ENCODE measurements at regions of chr18 and their contacts with region 1.

Region 1: GRCh38 chr18:36067055-36067957 is at the start of gene RPRD1A:
- DNase-seq: peak; percentile 97
- H3K4me3 ChIP-seq: peak within 1 kb of the TSS; percentile 81
- H3K27ac ChIP-seq: peak within 1 kb of the TSS; percentile 88
- H3K4me1 ChIP-seq: peaks cover 9% of the 10 kb centered on the region
- H3K27me3 ChIP-seq: no peaks in the 10 kb centered on the region
- CTCF ChIP-seq: no peak
- total RNA-seq, gene RPRD1A: 65.1 and 66.1 TPM in 2 replicates

Region 2: DNA sequence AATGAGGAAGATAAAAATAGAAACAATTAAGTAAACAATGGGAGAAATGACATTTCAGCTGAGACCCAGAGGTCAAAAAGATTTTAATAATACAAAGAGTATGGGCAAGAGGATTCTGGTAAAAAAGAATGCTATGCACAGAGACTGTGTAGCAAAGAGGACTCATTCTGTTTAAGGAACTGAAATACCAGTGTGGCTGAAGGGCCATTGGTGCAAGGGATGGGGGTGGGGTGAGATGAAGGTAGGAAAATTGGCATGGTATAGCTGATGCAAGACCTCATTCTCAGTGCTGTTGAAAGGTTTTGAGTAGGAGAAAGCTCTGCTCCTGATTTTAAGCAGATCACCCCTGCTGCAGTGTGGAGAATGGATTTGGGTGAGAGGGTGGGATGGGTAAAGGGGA is 475.0 kb before region 1 on chr18:
- CTCF ChIA-PET with region 1: no interaction called
- POLR2A ChIA-PET with region 1: no interaction called
- intact Hi-C with region 1: no loop called
- DNase-seq: no peak
- H3K4me3 ChIP-seq: no peak overlapping the region
- H3K27ac ChIP-seq: no peak overlapping the region
- H3K4me1 ChIP-seq: no peaks in the 10 kb centered on the region
- H3K27me3 ChIP-seq: no peaks in the 10 kb centered on the region
- CTCF ChIP-seq: no peak

Region 3: GRCh38 chr18:35721431-35722081 is 345.8 kb before region 1 on chr18:
- CTCF ChIA-PET with region 1: no interaction called
- POLR2A ChIA-PET with region 1: no interaction called
- intact Hi-C with region 1: no loop called
- DNase-seq: no peak
- H3K4me3 ChIP-seq: no peak overlapping the region
- H3K27ac ChIP-seq: no peak overlapping the region
- H3K4me1 ChIP-seq: no peaks in the 10 kb centered on the region
- H3K27me3 ChIP-seq: no peaks in the 10 kb centered on the region
- CTCF ChIP-seq: no peak

Region 4: DNA sequence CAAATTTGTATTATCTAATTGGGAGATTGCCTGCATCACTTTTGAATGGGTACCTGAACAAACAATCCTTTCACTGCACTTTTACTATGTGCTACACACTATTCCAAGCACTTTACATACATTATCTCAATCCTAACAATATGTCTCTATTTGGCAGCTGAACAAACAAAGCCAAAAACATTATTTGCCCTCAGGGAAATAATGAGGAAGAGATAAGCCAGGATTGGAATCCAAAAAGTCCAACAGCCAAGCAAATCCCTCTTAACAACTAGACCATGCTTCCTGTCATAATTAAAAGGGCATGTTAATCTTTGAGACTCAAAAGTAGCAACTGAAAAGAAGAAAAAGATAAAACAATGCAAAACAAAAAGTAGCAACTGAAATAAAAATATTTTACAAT is 32.1 kb before region 1 on chr18:
- CTCF ChIA-PET with region 1: no interaction called
- POLR2A ChIA-PET with region 1: no interaction called
- intact Hi-C with region 1: loop called (anchors 2 kb)
- DNase-seq: peak; percentile 90
- H3K4me3 ChIP-seq: no peak overlapping the region
- H3K27ac ChIP-seq: no peak overlapping the region
- H3K4me1 ChIP-seq: peaks cover 41% of the 10 kb centered on the region
- H3K27me3 ChIP-seq: no peaks in the 10 kb centered on the region
- CTCF ChIP-seq: no peak

Region 5: GRCh38 chr18:37253394-37254235 is 1186.3 kb after region 1 on chr18:
- CTCF ChIA-PET with region 1: no interaction called
- POLR2A ChIA-PET with region 1: no interaction called
- intact Hi-C with region 1: no loop called
- DNase-seq: peak; percentile 41
- H3K4me3 ChIP-seq: peak overlapping the region; percentile 24
- H3K27ac ChIP-seq: no peak overlapping the region
- H3K4me1 ChIP-seq: no peaks in the 10 kb centered on the region
- H3K27me3 ChIP-seq: peaks cover 43% of the 10 kb centered on the region
- CTCF ChIP-seq: no peak